SK-N-SH (cell line): ENCODE measurements at regions of chr14 and their contacts with region 1.

Region 1: GRCh38 chr14:74217672-74218448 is 21.4 kb upstream of the VSX2 start:
- DNase-seq: peak; percentile 94
- H3K4me3 ChIP-seq: peak overlapping the region; percentile 29 to 49; a peak in 3 of 4 replicates
- H3K27ac ChIP-seq: no peak overlapping the region
- H3K4me1 ChIP-seq: peaks cover 0 to 2% of the 10 kb centered on the region in 2 experiments; a peak in 1 of 4 replicates
- H3K27me3 ChIP-seq: peaks cover 39% of the 10 kb centered on the region
- CTCF ChIP-seq: peak; percentile 87
- EP300 ChIP-seq: no peak
- RAD21 ChIP-seq: peak; percentile 58

Region 2: GRCh38 chr14:74029136-74029535 is 188.7 kb before region 1 on chr14:
- CTCF ChIA-PET with region 1: no interaction called
- POLR2A ChIA-PET with region 1: no interaction called
- DNase-seq: no peak
- H3K4me3 ChIP-seq: no peak overlapping the region
- H3K27ac ChIP-seq: no peak overlapping the region
- H3K4me1 ChIP-seq: no peaks in the 10 kb centered on the region
- H3K27me3 ChIP-seq: no peaks in the 10 kb centered on the region
- CTCF ChIP-seq: no peak
- EP300 ChIP-seq: no peak
- RAD21 ChIP-seq: no peak

Region 3: GRCh38 chr14:74190907-74191575 is 26.8 kb before region 1 on chr14:
- CTCF ChIA-PET with region 1: interaction called, 23 read pairs
- POLR2A ChIA-PET with region 1: no interaction called
- DNase-seq: no peak
- H3K4me3 ChIP-seq: no peak overlapping the region
- H3K27ac ChIP-seq: no peak overlapping the region
- H3K4me1 ChIP-seq: peaks cover 0 to 9% of the 10 kb centered on the region in 2 experiments; a peak in 2 of 4 replicates
- H3K27me3 ChIP-seq: no peaks in the 10 kb centered on the region
- CTCF ChIP-seq: no peak
- EP300 ChIP-seq: no peak
- RAD21 ChIP-seq: no peak

Region 4: GRCh38 chr14:74203639-74204038 is 14.2 kb before region 1 on chr14:
- CTCF ChIA-PET with region 1: interaction called, 10 read pairs
- POLR2A ChIA-PET with region 1: no interaction called
- DNase-seq: no peak
- H3K4me3 ChIP-seq: no peak overlapping the region
- H3K27ac ChIP-seq: no peak overlapping the region
- H3K4me1 ChIP-seq: no peaks in the 10 kb centered on the region
- H3K27me3 ChIP-seq: no peaks in the 10 kb centered on the region
- CTCF ChIP-seq: no peak
- EP300 ChIP-seq: no peak
- RAD21 ChIP-seq: no peak

Region 5: DNA sequence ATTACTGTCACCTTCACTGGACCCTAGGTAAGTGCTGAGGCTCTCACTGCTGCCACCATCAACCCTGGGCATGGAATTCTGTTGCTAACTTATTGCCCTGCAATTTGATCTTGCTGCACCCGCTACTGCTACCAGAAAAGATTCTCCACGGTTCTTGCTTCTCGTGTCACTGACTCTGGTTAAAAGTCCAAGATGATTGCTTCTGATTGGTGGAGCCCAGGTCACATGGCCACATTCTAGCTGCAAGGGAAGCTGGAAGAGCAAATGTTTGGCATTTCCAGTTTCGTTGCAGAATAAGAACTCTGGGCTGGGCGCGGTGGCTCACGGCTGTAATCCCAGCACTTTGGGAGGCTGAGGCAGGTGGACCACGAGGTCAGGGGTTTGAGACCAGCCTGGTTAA is 13.9 kb after region 1 on chr14:
- CTCF ChIA-PET with region 1: interaction called, 43 read pairs
- POLR2A ChIA-PET with region 1: no interaction called
- DNase-seq: no peak
- H3K4me3 ChIP-seq: no peak overlapping the region
- H3K27ac ChIP-seq: no peak overlapping the region
- H3K4me1 ChIP-seq: no peaks in the 10 kb centered on the region
- H3K27me3 ChIP-seq: peaks cover 55% of the 10 kb centered on the region
- CTCF ChIP-seq: no peak
- EP300 ChIP-seq: no peak
- RAD21 ChIP-seq: no peak

Region 6: GRCh38 chr14:74249433-74250375 is 31.8 kb after region 1 on chr14:
- CTCF ChIA-PET with region 1: interaction called, 64 read pairs
- POLR2A ChIA-PET with region 1: no interaction called
- DNase-seq: no peak
- H3K4me3 ChIP-seq: no peak overlapping the region
- H3K27ac ChIP-seq: no peak overlapping the region
- H3K4me1 ChIP-seq: no peaks in the 10 kb centered on the region
- H3K27me3 ChIP-seq: peaks cover 48% of the 10 kb centered on the region
- CTCF ChIP-seq: no peak
- EP300 ChIP-seq: no peak
- RAD21 ChIP-seq: no peak

Region 7: GRCh38 chr14:74377976-74378655 is 160.3 kb after region 1 on chr14:
- CTCF ChIA-PET with region 1: no interaction called
- POLR2A ChIA-PET with region 1: no interaction called
- DNase-seq: no peak
- H3K4me3 ChIP-seq: no peak overlapping the region
- H3K27ac ChIP-seq: no peak overlapping the region
- H3K4me1 ChIP-seq: no peaks in the 10 kb centered on the region
- H3K27me3 ChIP-seq: peaks cover 3% of the 10 kb centered on the region; the same call in 1 of the 2 replicates
- CTCF ChIP-seq: no peak
- EP300 ChIP-seq: no peak
- RAD21 ChIP-seq: no peak